Activated CD4-positive, alpha-beta memory T cell treated with anti-CD3 and anti-CD28 coated beads for 36 hours (primary cell): ENCODE measurements at regions of chr12 and their contacts with region 1.

Region 1: DNA sequence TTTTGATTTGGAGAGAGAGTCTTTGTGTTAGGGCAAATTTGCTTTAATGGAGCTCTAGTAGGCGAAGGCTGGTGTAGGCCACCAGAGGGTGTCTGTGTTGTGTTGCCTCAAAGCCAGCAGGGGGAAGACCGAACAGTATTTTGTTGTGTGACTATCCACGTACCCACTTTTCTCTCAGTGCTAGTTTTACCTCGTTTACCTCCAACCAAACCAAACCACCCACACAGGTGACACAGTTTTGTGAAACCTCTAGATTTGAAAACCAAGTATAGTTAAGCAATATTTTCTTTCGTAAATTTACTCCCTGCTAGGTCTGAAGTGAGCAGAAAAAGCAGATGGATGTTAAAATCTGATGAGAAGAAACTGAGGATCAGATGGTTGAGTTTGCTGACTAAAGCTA is 36.3 kb upstream of the NPFF start:
- DNase-seq: peak; percentile 73
- H3K4me3 Mint-ChIP-seq: no peak overlapping the region
- H3K27ac Mint-ChIP-seq: peak overlapping the region; percentile 66
- H3K4me1 Mint-ChIP-seq: peaks cover 11% of the 10 kb centered on the region
- H3K27me3 Mint-ChIP-seq: no peaks in the 10 kb centered on the region

Region 2: GRCh38 chr12:53159195-53159839 is 384.2 kb before region 1 on chr12:
- CTCF ChIA-PET with region 1: no interaction called
- POLR2A ChIA-PET with region 1: no interaction called
- intact Hi-C with region 1: no loop called
- DNase-seq: peak; percentile 95
- H3K4me3 Mint-ChIP-seq: no peak overlapping the region
- H3K27ac Mint-ChIP-seq: no peak overlapping the region
- H3K4me1 Mint-ChIP-seq: peaks cover 6% of the 10 kb centered on the region
- H3K27me3 Mint-ChIP-seq: no peaks in the 10 kb centered on the region

Region 3: DNA sequence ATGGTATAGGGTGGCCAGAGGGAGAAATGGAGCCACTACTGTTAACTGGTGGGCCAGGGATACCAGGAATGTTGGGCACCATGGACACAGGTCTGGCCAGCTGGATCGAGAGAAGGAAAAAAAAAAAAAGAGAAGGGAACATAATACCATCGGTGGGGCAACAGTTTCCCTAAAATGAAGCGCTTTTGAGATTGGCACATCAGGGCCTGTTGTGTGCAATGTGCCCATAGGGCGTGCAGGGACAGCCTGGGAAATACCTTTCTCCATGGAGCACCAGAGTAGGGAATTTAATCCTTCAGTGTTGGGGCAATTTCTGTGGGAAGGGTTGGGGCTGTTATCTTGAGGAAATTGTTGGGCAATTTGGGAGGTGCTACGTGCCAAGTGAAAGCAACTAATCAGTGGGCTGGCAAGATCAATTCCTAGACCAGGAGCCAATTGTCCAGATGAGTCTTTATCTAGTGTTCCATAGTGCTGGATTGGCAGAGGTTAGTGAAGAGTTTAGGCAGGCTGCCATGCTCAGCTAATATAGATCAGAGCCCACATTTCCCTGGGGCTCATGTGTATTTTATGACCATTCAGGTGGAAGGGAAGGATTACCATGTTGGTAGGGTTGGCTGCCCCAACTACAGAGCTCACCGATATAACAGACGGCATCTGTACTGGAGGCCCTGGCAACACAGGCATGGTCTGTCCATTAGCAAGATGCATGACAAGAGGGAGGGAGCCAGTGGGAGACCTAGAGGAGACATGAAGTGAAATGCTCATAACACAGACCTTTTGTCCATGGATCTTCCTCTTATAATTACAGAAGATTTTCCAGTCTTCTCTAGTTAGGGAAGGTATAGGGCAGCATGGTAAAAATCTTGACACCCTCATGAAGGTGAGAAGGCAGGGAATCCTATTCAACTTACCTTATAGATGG is 10.8 kb before region 1 on chr12:
- CTCF ChIA-PET with region 1: interaction called, 14 read pairs
- POLR2A ChIA-PET with region 1: no interaction called
- intact Hi-C with region 1: no loop called
- DNase-seq: no peak
- H3K4me3 Mint-ChIP-seq: no peak overlapping the region
- H3K27ac Mint-ChIP-seq: no peak overlapping the region
- H3K4me1 Mint-ChIP-seq: no peaks in the 10 kb centered on the region
- H3K27me3 Mint-ChIP-seq: no peaks in the 10 kb centered on the region

Region 4: GRCh38 chr12:53575502-53576253 is 32.1 kb after region 1 on chr12:
- CTCF ChIA-PET with region 1: interaction called, 4 read pairs
- POLR2A ChIA-PET with region 1: no interaction called
- intact Hi-C with region 1: loop called (anchors 5 kb)
- DNase-seq: peak; percentile 18
- H3K4me3 Mint-ChIP-seq: no peak overlapping the region
- H3K27ac Mint-ChIP-seq: no peak overlapping the region
- H3K4me1 Mint-ChIP-seq: peaks cover 41% of the 10 kb centered on the region
- H3K27me3 Mint-ChIP-seq: no peaks in the 10 kb centered on the region

Region 5: DNA sequence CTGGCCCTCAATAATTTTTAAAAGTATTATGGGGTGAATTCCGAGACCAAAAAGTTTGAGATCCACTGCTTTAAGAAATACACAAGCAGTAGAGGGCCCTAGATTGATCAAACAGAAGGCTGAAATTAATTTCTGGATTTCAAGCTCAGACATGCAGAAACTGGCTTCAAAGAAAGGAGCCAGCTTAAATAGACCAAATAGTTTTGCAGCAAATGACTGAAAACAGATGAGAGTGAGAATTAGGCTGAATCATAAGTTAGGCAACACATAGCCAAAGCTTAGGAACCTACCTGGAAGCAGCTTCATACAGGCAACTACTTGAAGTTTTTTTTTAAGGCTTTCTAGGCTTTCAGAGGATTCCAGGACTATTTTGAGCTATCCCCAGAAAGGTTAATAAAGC is 70.3 kb after region 1 on chr12:
- CTCF ChIA-PET with region 1: interaction called, 11 read pairs
- POLR2A ChIA-PET with region 1: no interaction called
- intact Hi-C with region 1: no loop called
- DNase-seq: no peak
- H3K4me3 Mint-ChIP-seq: no peak overlapping the region
- H3K27ac Mint-ChIP-seq: no peak overlapping the region
- H3K4me1 Mint-ChIP-seq: peaks cover 21% of the 10 kb centered on the region
- H3K27me3 Mint-ChIP-seq: no peaks in the 10 kb centered on the region

Region 6: DNA sequence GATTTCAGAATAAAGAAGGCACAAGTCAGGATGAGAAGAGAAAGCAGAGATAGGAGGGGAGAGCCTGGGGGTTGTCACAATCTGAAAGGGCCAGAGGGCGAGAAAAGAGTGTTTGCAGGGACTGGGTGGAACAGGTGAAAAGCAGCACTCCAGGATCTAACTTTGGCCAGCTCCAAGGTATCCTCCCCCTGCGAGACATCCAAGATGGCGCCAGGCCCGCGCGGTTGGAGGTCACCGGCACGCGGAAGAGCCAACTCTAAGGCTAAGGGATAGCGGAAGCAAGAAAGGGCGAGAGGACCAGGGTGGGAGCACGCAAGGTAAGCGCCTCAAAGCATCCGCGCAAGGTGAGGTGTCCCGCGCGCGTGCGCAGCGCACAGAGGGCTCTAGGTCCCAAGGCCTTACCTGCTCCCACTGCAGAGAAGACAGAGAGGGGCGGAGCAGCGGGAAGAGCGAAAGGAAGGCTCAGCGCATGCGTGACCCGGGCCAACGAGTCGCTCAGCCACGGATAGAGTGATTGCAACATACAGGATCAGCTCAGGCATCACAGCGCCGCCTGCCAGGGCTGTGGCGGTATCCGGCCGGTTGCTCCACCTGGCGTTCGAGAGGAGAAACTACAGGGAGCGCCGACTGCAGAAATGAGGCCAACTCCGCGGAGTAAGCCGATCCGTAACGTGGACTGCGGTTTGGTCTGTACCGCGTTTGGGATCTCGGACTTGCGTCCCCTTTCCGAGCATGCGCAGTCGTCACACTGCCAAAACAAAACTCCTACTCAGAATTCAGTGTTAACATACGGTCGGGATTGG is 132.3 kb after region 1 on chr12 and contains the start of gene ATP5MC2:
- CTCF ChIA-PET with region 1: interaction called, 132 read pairs
- POLR2A ChIA-PET with region 1: interaction called, 7 read pairs
- intact Hi-C with region 1: loop called (anchors 1 kb)
- DNase-seq: peak; percentile 98
- H3K4me3 Mint-ChIP-seq: peak within 1 kb of the TSS; percentile 81
- H3K27ac Mint-ChIP-seq: peak within 1 kb of the TSS; percentile 89
- H3K4me1 Mint-ChIP-seq: peaks cover 26% of the 10 kb centered on the region
- H3K27me3 Mint-ChIP-seq: peaks cover 19% of the 10 kb centered on the region
- total RNA-seq, gene ATP5MC2: 378 TPM